ENCODE measurements at regions of chr17 and their contacts with region 1.

Region 1: GRCh38 chr17:30716461-30717300 is 107.8 kb downstream of the CRLF3 start:
- DNase-seq: no peak
- ATAC-seq: peak; percentile 15; the same call in 1 of the 3 replicates
- H3K4me3 ChIP-seq: no peak overlapping the region
- H3K27ac ChIP-seq: no peak overlapping the region
- H3K4me1 ChIP-seq: peaks cover 0 to 20% of the 10 kb centered on the region in 2 experiments; a peak in 3 of 5 replicates
- H3K27me3 ChIP-seq: no peaks in the 10 kb centered on the region
- CTCF ChIP-seq: peak; percentile 30 to 36 (median 31); a peak in 5 of 6 replicates
- EP300 ChIP-seq: no peak
- POLR2A ChIP-seq: no peak
- RAD21 ChIP-seq: peak in 1 of 2 experiments; percentile 31; a peak in 2 of 4 replicates

Region 2: DNA sequence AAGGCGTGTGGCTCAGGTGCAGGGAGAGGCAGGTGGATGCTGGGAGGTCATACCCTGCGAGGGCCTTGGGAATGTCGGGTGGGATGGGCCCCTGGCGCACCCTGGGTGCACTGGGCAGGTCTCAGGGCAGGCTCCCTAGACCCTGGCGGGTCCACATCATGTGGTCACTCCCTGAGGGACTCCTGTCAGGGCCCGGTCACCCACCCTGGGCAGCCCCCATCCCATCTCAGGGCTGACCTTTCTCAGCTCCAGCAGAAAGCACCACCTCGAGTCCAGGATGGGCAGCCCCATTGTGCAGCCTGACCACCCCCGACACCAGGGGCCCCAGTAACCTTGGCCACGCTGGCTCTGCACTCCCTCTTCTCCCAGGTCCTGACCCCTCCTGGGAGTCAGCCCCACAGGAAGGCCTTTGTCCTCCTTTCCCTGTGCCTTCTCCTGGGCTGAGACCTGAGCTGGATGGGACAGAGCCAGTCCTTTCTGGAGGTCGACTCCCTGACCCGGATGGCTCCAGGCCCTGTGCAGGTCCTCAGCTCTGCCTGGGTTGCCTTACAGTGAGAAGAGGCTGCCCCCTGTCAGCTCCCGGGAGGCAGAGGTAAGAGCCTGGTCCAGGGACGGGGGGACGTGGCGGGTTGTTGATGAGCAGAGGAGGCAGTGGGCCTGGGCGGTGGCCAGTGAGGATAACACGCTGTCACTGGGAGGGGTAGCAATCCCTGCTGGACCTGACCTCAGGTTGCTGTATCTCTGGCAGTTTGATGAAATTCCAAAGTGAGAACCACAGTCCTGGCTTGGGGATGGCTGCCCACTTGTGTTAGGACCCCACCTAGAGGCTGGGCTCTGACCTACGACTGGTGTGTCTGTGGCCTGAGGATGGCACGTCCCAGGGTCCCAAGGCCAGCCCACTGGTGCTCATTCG is 161.6 kb before region 1 on chr17:
- CTCF ChIA-PET with region 1: no interaction called
- POLR2A ChIA-PET with region 1: no interaction called
- in situ Hi-C with region 1: loop called (anchors 5 kb)
- intact Hi-C with region 1: loop called (anchors 10 kb)
- DNase-seq: peak in 2 of 4 experiments; percentile 22 to 46
- ATAC-seq: peak; percentile 79
- H3K4me3 ChIP-seq: no peak overlapping the region
- H3K27ac ChIP-seq: no peak overlapping the region
- H3K4me1 ChIP-seq: peaks cover 10 to 30% of the 10 kb centered on the region in 2 experiments
- H3K27me3 ChIP-seq: peaks cover 6 to 49% of the 10 kb centered on the region in 2 experiments; a peak in 4 of 5 replicates
- CTCF ChIP-seq: peak; percentile 40 to 63 (median 46); a peak in 5 of 6 replicates
- EP300 ChIP-seq: no peak
- POLR2A ChIP-seq: no peak
- RAD21 ChIP-seq: peak; percentile 19 to 64; a peak in 2 of 4 replicates

Region 3: GRCh38 chr17:30565073-30565935 is 151.4 kb before region 1 on chr17:
- CTCF ChIA-PET with region 1: no interaction called
- POLR2A ChIA-PET with region 1: no interaction called
- in situ Hi-C with region 1: no loop called
- intact Hi-C with region 1: loop called (anchors 10 kb)
- DNase-seq: no peak
- ATAC-seq: no peak
- H3K4me3 ChIP-seq: no peak overlapping the region
- H3K27ac ChIP-seq: no peak overlapping the region
- H3K4me1 ChIP-seq: peaks cover 0 to 17% of the 10 kb centered on the region in 2 experiments; a peak in 3 of 5 replicates
- H3K27me3 ChIP-seq: peaks cover 6 to 30% of the 10 kb centered on the region in 2 experiments; a peak in 4 of 5 replicates
- CTCF ChIP-seq: 0 out of 6 replicates have a peak, but pooled peaks of 2 of the 3 experiments have one; percentile 10 to 25
- EP300 ChIP-seq: no peak
- POLR2A ChIP-seq: no peak
- RAD21 ChIP-seq: no peak; a peak in 1 of 4 replicates

Region 4: GRCh38 chr17:30605027-30605426 is 111.7 kb before region 1 on chr17:
- CTCF ChIA-PET with region 1: no interaction called
- POLR2A ChIA-PET with region 1: no interaction called
- in situ Hi-C with region 1: no loop called
- intact Hi-C with region 1: no loop called
- DNase-seq: no peak
- ATAC-seq: no peak
- H3K4me3 ChIP-seq: no peak overlapping the region
- H3K27ac ChIP-seq: no peak overlapping the region
- H3K4me1 ChIP-seq: peaks cover 0 to 11% of the 10 kb centered on the region in 2 experiments; a peak in 2 of 5 replicates
- H3K27me3 ChIP-seq: peaks cover 2 to 10% of the 10 kb centered on the region in 2 experiments; a peak in 3 of 5 replicates
- CTCF ChIP-seq: no peak
- EP300 ChIP-seq: no peak
- POLR2A ChIP-seq: no peak
- RAD21 ChIP-seq: no peak

Region 5: DNA sequence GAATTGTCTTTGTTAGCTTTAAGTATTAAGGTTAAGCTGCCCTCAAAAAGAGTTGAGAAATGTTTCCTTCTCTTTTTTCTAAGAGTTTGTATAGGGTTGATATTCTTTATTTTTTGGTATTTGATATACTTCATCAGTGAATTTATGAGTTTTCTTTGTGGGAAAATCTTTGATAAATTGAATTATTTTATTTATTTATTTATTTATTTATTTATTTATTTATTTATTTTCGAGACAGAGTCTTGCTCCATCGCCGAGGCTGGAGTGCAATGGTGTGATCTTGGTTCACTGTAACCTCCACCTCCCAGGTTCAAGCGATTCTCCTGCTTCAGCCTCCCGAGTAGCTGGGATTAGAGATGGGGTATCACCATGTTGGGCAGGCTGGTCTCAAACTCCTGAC is 169.5 kb after region 1 on chr17:
- CTCF ChIA-PET with region 1: no interaction called
- POLR2A ChIA-PET with region 1: no interaction called
- in situ Hi-C with region 1: no loop called
- intact Hi-C with region 1: no loop called
- DNase-seq: no peak
- ATAC-seq: no peak
- H3K4me3 ChIP-seq: no peak overlapping the region
- H3K27ac ChIP-seq: no peak overlapping the region
- H3K4me1 ChIP-seq: no peaks in the 10 kb centered on the region
- H3K27me3 ChIP-seq: no peaks in the 10 kb centered on the region
- CTCF ChIP-seq: no peak
- EP300 ChIP-seq: no peak
- POLR2A ChIP-seq: no peak
- RAD21 ChIP-seq: no peak